ENCODE measurements at regions of chr18 and their contacts with region 1.

Region 1: GRCh38 chr18:69226971-69227370 is 173.7 kb upstream of the DOK6 start:
- DNase-seq: no peak
- ATAC-seq: no peak
- H3K4me3 Mint-ChIP-seq: no peak overlapping the region
- H3K27ac Mint-ChIP-seq: no peak overlapping the region
- H3K4me1 Mint-ChIP-seq: no peaks in the 10 kb centered on the region
- H3K27me3 Mint-ChIP-seq: no peaks in the 10 kb centered on the region

Region 2: DNA sequence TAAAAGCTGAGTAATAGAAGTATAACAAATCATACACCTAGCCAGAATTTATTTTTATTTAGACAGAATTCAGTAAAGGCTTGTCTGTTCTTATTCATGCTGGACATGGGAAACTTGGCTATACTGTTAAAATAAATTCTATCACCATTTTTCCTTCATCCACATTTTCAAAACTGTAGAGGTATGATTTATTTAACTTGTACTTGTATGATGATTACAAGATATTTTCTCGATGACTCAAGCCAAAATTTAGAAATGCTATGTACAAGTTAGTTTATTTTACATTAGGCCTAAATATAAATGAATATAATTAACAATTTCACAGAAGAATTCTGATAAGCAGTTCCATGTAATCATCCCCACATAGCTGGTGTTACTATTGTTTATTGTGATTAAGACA is 21.0 kb before region 1 on chr18:
- CTCF ChIA-PET with region 1: no interaction called
- POLR2A ChIA-PET with region 1: no interaction called
- intact Hi-C with region 1: loop called in 1 of 2 experiments (anchors 2 kb)
- DNase-seq: no peak
- ATAC-seq: no peak
- H3K4me3 Mint-ChIP-seq: no peak overlapping the region
- H3K27ac Mint-ChIP-seq: no peak overlapping the region
- H3K4me1 Mint-ChIP-seq: no peaks in the 10 kb centered on the region
- H3K27me3 Mint-ChIP-seq: no peaks in the 10 kb centered on the region